ENCODE measurements at regions of chr4 and their contacts with region 1.

Region 1: GRCh38 chr4:473570-474457 is 25.1 kb downstream of the ZNF721 start:
- DNase-seq: peak; percentile 94 to 98 (median 97)
- H3K4me3 ChIP-seq: peak overlapping the region; percentile 66 to 100 (median 94)
- H3K27ac ChIP-seq: peak overlapping the region in 58 of 59 donors; percentile 51 to 97 (median 87)
- H3K27me3 ChIP-seq: no peaks in the 10 kb centered on the region
- CTCF ChIP-seq: peak in 12 of 56 donors; percentile 9 to 47 (median 19)

Region 2: DNA sequence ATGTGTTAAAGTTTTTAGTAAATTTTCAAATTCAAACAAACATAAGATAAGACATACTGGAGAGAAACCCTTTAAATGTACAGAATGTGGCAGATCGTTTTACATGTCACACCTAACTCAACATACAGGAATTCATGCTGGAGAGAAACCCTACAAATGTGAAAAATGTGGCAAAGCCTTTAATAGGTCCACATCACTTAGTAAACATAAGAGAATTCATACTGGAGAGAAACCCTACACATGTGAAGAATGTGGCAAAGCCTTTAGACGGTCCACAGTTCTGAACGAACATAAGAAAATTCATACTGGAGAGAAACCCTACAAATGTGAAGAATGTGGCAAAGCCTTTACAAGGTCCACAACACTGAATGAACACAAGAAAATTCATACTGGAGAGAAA is 387.9 kb before region 1 on chr4:
- intact Hi-C with region 1: no loop called
- DNase-seq: no peak
- H3K4me3 ChIP-seq: no peak overlapping the region
- H3K27ac ChIP-seq: no peak overlapping the region
- H3K27me3 ChIP-seq: no peaks in the 10 kb centered on the region
- CTCF ChIP-seq: no peak

Region 3: GRCh38 chr4:304969-305680 is 168.7 kb before region 1 on chr4 and contains the start of gene ZNF732:
- intact Hi-C with region 1: no loop called
- DNase-seq: peak in 6 of 10 donors; percentile 7 to 66 (median 41)
- H3K4me3 ChIP-seq: peak within 1 kb of the TSS in 58 of 59 donors; percentile 11 to 71 (median 50)
- H3K27ac ChIP-seq: no peak within 1 kb of the TSS
- H3K27me3 ChIP-seq: peaks cover 0 to 29% (median 7%) of the 10 kb centered on the region in 45 donors
- CTCF ChIP-seq: no peak
- total RNA-seq, gene ZNF732: 0.19 to 2.1 (median 0.48) TPM in 86 of 120 experiments, not detected in the others

Region 4: GRCh38 chr4:498328-498904 is 24.6 kb after region 1 on chr4:
- intact Hi-C with region 1: loop called in 1 of 2 experiments (anchors 2 kb)
- DNase-seq: no peak
- H3K4me3 ChIP-seq: peak overlapping the region; percentile 70 to 100 (median 98)
- H3K27ac ChIP-seq: peak overlapping the region in 56 of 59 donors; percentile 12 to 94 (median 84)
- H3K27me3 ChIP-seq: no peaks in the 10 kb centered on the region
- CTCF ChIP-seq: no peak